ENCODE measurements at regions of chr11 and their contacts with region 1.

Region 1: DNA sequence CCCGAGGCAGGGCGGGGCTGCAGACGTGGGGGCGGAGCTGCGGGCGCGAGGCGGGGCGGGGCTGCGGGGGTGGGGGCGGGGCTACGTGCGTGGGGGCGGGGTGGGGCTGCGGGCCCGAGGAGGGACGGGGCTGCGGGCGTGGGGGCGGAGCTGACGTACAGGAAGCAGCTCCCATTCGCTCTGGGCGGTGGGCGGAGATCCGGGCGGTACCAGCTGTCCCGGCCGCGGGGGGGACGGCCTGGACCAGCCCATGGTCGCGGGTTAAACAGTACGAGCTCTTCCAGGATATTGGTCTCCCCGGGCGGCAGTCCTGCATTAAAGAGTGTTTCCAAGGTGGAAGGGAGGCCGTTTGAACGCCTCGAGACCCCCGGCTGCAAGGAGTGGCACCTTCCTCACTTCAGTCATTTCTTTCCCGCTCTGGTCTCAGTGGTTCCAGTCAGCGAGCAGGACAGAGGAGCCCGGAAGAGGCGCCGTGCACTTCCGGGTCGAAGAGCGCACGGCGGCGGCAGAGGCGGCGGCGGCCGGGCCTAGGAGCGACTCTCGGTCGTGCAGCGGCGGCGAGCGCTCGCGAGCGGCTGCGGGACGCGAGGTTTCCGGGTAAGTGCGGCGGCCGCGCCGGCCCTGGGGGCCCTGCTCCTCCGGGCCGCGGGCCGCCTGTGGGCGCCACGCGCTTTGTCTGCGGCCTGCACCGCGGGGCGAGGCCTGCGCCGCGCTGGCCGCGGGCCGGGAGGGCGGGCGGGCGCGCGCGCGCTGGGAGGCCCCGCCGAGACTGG is at the start of gene PHRF1:
- DNase-seq: peak; percentile 87
- H3K4me3 ChIP-seq: peak within 1 kb of the TSS; percentile 91
- H3K27ac ChIP-seq: peak within 1 kb of the TSS; percentile 94
- H3K27me3 ChIP-seq: peaks cover 8% of the 10 kb centered on the region
- CTCF ChIP-seq: no peak
- polyA plus RNA-seq, gene PHRF1: 7.3 and 8.4 TPM in 2 replicates

Region 2: GRCh38 chr11:535519-536454 is 40.4 kb before region 1 on chr11 and contains the start of gene HRAS:
- CTCF ChIA-PET with region 1: no interaction called
- POLR2A ChIA-PET with region 1: interaction called, 13 read pairs
- DNase-seq: peak; percentile 78
- H3K4me3 ChIP-seq: peak within 1 kb of the TSS; percentile 73
- H3K27ac ChIP-seq: no peak within 1 kb of the TSS
- H3K27me3 ChIP-seq: no peaks in the 10 kb centered on the region
- CTCF ChIP-seq: no peak
- polyA plus RNA-seq, gene HRAS: 44.7 and 58.7 TPM in 2 replicates

Region 3: DNA sequence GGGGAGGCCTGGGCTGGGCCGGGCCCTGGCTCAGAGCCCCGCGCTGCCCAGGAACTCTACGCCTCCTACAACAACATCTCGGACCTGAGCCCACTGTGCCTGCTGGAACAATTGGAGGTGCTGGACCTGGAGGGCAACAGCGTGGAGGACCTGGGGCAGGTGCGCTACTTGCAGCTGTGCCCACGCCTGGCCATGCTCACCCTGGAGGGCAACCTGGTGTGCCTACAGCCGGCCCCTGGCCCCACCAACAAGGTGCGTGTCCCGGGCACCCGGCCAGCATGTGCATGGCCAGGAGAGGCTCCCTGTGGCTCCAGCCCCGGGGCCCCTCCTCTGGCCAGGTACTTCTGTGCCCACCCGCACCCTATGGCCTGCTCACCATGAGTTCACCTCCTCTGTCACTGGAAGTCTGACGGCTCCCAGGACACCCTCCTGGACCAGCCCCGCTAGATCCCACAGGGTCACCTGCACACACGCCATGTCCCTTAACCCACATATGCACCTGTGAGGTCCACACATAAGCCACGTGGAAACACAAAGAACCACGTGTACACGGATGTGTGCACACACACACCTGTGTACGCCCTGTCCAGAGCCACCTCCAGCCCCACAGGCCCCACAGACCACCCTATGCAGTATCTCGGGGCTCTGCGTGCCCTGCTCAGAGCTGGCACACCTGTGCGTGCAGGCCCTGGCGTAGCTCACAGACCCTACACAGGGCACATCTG is 26.0 kb before region 1 on chr11:
- CTCF ChIA-PET with region 1: no interaction called
- POLR2A ChIA-PET with region 1: no interaction called
- DNase-seq: no peak
- H3K4me3 ChIP-seq: no peak overlapping the region
- H3K27ac ChIP-seq: no peak overlapping the region
- H3K27me3 ChIP-seq: peaks cover 11% of the 10 kb centered on the region
- CTCF ChIP-seq: no peak

Measured in AG04450 (cell line).